ENCODE measurements at regions of chr3 and their contacts with region 1.

Region 1: DNA sequence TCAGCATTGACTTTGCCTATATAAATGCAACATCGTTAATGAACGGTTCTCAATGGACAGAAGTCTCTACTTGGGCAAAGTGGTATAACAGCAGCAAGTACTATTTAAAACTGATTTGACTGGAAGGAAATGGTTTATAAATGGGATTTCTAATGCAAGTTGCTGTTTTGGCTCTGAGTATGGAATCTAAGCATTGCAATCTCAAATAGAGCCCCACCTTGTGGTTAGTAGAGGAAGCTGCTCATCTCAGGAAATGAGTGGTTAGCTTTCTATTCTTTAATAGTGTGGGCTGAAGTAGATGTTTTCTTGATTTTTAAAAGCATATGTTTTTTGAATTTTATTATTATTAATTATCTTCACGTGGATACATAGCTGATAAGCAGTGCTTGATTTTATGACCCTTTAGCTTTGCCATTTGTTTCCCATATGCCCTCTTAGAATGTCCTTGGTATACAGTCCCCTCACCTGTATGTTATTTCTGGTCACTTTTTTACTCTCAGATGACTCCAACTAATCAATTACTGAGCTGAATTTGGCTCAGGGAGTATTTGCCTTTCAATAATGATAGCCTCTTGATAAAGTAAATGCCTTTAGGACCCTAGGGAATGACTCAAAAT is 67.1 kb downstream of the OXSM start:
- DNase-seq: peak in 10 of 42 donors; percentile 7 to 61 (median 22)

Region 2: GRCh38 chr3:25473246-25473645 is 383.8 kb before region 1 on chr3:
- intact Hi-C with region 1: no loop called
- DNase-seq: peak in 30 of 42 donors; percentile 18 to 70 (median 43)

Region 3: DNA sequence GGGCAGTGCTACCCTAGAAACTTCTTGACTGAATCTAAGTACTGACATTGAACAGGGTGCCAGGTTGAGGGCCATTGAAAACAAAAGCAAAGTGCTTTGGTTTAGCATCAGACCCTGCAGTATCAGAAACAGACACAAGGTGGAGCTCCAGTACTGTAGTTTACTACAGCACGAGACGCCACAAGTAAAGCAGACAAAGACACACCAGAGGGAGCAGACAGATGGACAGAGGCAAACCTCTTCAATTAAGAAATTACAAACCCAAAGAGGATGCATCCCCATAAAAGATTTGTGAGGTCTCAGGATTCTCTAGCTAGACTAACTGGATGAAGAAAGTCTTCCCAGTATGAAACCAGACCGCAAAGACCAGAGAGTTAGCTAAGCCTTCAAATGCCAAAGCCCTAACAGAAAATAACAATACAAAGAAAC is 208.9 kb before region 1 on chr3:
- intact Hi-C with region 1: loop called (anchors 5 kb)
- DNase-seq: peak in 35 of 42 donors; percentile 46 to 94 (median 75)

Region 4: GRCh38 chr3:25789596-25790556 is 67.1 kb before region 1 on chr3 and contains the start of gene OXSM:
- intact Hi-C with region 1: loop called (anchors 10 kb)
- DNase-seq: peak; percentile 64 to 93 (median 84)